Activated B cell treated with CpG ODN at 0.5 μM for 24 hours (primary cell): ENCODE measurements at regions of chr2 and their contacts with region 1.

Region 1: DNA sequence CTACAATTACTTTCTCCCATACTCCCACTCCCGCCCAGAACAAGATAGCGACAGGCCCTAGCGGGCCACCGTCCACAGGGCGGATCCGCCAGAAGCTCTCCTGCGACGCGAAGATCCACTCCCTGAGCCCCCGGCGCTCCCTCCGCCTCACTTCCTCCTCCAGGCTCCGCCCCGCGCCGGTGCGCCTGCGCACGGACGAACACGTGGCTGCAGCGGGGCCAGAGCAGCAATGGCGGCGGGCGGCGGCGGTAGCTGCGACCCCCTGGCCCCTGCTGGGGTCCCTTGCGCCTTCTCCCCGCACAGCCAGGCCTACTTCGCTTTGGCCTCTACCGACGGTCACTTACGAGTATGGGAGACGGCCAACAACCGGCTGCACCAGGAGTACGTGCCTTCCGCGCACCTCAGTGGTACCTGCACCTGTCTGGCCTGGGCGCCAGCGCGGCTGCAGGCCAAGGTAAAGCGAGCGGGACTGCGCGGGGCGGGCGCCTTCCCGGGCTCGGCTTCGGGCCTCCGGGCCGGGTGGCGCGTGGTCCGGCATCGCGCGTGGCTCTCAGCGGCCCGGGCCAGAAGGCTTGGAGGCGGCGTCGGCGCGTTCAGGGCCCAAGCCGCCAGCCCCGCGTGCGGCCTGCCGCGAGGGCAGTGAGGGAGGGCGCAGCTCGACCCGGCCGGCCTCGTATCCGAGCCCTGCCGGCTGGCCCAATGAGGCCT is at the start of gene WDR43:
- DNase-seq: peak; percentile 99
- ATAC-seq: peak; percentile 99
- H3K4me3 Mint-ChIP-seq: peak within 1 kb of the TSS; percentile 99
- H3K27ac Mint-ChIP-seq: peak within 1 kb of the TSS; percentile 87
- H3K4me1 Mint-ChIP-seq: peaks cover 44% of the 10 kb centered on the region
- H3K27me3 Mint-ChIP-seq: no peaks in the 10 kb centered on the region
- CTCF ChIP-seq: no peak
- total RNA-seq, gene WDR43: 86.6 and 98.8 TPM in 2 replicates

Region 2: DNA sequence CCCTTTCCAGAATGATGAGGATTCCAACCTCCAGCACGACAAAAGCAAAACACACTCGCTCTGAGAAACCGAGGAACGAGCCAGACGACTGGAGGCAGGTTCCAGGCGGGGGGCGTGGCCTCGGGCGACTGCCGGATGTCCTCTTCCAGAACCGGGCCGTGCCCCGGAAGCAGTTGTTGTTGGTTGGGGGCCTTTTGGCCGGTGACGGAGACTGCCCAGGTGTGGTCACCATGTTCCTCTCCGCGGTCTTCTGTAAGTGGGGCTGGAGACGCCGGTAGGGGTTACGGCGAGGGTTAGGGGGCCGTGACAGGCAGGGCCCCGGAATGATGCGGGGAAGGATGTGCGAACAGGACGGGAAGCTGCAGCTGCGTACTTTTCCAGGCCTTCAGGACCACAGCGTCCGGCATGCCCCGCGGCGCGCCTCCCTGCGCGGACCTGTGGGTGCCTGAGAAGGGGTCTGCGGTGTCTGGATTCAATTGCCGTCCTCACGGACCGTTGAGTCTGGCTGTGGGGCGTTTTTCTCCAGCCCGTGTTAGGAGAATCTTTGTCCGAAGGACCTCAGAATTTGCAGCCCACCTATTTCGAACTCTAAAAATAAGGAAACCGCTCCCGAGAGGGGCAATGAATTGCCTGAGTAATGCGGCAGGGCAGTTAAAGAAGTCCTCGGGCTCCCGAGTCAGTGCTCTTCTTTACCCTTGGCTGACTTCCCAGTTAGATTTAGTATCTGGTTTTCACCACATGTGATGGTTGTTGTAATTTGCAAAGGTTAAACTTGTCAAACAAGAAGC is 1122.9 kb before region 1 on chr2 and contains the start of gene MRPL33:
- CTCF ChIA-PET with region 1: no interaction called
- POLR2A ChIA-PET with region 1: no interaction called
- intact Hi-C with region 1: loop called (anchors 10 kb)
- DNase-seq: peak; percentile 85
- ATAC-seq: peak; percentile 92
- H3K4me3 Mint-ChIP-seq: peak within 1 kb of the TSS; percentile 100
- H3K27ac Mint-ChIP-seq: peak within 1 kb of the TSS; percentile 98
- H3K4me1 Mint-ChIP-seq: peaks cover 30% of the 10 kb centered on the region
- H3K27me3 Mint-ChIP-seq: peaks cover 13% of the 10 kb centered on the region
- CTCF ChIP-seq: no peak
- total RNA-seq, gene MRPL33: 24.6 and 27.4 TPM in 2 replicates

Region 3: DNA sequence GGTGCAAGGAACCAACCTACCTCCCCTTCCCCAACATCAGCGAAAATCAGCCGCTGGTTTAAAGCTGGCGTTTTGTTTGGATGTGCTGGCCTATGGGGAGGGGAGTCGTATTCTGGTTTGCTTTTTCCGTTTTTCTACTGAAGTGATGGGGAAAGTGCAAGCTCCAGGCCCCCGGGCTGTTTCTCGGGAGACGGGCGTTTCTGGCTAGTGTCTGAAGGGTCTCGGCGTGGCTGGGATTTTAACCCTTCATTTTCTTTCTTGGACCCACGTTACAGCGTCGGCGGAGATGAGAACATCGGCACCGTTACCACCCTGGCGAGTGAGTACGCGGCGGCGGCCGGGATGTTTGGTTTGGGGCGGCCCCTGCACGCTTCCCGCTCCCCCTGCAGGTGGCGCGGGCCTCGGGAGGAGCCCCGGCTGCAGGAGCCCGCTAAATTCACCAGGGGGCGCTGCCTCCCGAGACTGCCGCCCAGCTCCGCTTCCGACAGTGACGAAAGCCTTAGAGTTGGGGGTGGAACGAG is 328.0 kb before region 1 on chr2:
- CTCF ChIA-PET with region 1: no interaction called
- POLR2A ChIA-PET with region 1: interaction called, 5 read pairs
- intact Hi-C with region 1: loop called (anchors 1 kb)
- DNase-seq: peak; percentile 85
- ATAC-seq: peak; percentile 99
- H3K4me3 Mint-ChIP-seq: peak overlapping the region; percentile 93
- H3K27ac Mint-ChIP-seq: peak overlapping the region; percentile 76
- H3K4me1 Mint-ChIP-seq: peaks cover 12% of the 10 kb centered on the region
- H3K27me3 Mint-ChIP-seq: peaks cover 8% of the 10 kb centered on the region
- CTCF ChIP-seq: peak; percentile 23

Region 4: DNA sequence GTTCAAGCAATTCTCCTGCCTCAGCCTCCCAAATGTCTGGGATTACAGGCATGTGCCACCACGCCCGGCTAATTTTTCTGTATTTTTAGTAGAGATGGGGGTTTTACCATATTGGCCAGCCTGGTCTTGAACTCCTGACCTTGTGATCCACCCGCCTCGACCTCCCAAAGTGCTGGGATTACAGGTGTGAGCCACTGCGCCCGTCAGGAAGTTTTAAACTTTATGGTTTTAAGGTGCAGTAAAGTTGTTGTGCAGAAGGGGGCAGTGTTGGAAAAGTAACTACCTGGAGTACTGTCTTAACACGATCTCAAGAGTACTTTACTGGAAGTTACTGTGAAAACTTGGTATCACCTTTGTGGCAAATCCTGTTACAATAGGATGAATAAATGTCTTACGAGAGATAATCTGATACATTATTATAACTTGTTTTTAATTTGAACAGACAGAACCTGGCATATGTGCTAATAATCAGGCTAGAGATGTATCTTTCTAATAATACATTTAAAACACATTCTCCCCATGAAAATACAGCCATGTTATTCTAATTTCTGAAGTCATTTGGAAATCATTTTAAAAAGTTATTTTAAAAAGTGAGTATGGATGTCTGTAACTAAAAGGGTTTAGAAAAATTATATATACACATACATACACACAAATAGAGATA is 73.2 kb before region 1 on chr2:
- CTCF ChIA-PET with region 1: interaction called, 3 read pairs
- POLR2A ChIA-PET with region 1: interaction called, 4 read pairs
- intact Hi-C with region 1: loop called (anchors 5 kb)
- DNase-seq: peak; percentile 17
- ATAC-seq: peak; percentile 72
- H3K4me3 Mint-ChIP-seq: no peak overlapping the region
- H3K27ac Mint-ChIP-seq: no peak overlapping the region
- H3K4me1 Mint-ChIP-seq: peaks cover 4% of the 10 kb centered on the region
- H3K27me3 Mint-ChIP-seq: no peaks in the 10 kb centered on the region
- CTCF ChIP-seq: no peak

Region 5: DNA sequence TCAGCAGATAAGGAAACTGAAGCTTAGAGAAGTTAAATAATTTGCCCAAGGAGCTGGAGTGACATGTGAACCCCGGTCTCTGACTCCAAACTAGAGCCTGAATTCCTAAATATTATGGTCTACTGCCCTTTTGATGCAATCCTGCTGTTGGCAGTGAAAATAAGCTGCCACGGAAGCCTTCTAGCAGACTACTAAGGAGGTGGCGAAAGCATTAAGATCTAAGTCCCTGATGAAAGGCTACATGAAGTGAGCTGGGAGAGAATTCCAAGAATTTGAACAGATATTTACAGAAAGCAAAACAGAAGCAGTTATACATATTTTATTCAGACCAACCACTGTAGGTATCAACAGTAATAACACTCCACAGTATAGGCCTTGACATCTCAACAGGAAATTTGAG is 52.6 kb before region 1 on chr2:
- CTCF ChIA-PET with region 1: no interaction called
- POLR2A ChIA-PET with region 1: no interaction called
- intact Hi-C with region 1: no loop called
- DNase-seq: no peak
- ATAC-seq: no peak
- H3K4me3 Mint-ChIP-seq: no peak overlapping the region
- H3K27ac Mint-ChIP-seq: no peak overlapping the region
- H3K4me1 Mint-ChIP-seq: no peaks in the 10 kb centered on the region
- H3K27me3 Mint-ChIP-seq: no peaks in the 10 kb centered on the region
- CTCF ChIP-seq: no peak

Region 6: GRCh38 chr2:28855193-28855592 is 39.4 kb before region 1 on chr2:
- CTCF ChIA-PET with region 1: no interaction called
- POLR2A ChIA-PET with region 1: interaction called, 11 read pairs
- intact Hi-C with region 1: no loop called
- DNase-seq: no peak
- ATAC-seq: no peak
- H3K4me3 Mint-ChIP-seq: no peak overlapping the region
- H3K27ac Mint-ChIP-seq: no peak overlapping the region
- H3K4me1 Mint-ChIP-seq: no peaks in the 10 kb centered on the region
- H3K27me3 Mint-ChIP-seq: no peaks in the 10 kb centered on the region
- CTCF ChIP-seq: no peak

Region 7: DNA sequence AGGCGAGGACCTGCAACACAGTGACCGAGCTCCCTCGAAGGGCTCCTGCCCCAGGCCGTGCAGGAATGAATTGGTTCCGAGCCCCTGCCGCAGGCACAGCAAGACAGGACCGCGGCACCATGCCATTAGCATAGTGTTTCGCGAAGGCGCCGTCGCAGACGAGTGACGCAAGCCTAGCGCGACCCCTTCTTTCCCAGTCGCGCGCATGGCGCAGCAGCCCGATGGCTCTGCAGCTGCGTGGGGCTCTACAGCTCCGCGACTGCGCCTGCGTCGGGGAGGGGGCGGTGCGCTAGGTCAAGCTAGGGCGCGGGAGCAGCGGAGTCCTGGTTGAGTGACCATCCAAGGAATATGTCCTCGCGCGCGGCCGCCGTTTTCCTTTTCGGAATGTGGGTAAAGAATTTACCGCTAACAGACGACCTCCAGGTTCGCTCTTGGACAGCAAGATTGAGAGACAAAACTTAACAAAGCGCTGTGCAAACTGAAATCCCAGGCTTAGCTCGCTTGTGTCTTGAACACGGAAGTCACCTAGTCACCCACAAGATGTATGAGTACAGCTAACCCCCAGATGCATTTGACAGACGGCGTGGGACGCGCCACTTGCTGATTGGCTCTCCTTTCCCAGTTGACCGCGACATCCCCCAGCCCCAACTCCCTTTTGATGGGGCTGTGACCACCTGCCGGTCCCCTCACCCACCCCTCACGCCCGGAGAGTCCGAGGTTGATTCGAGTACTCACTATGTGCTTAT is 24.3 kb before region 1 on chr2 and contains the start of gene TRMT61B:
- CTCF ChIA-PET with region 1: interaction called, 3 read pairs
- POLR2A ChIA-PET with region 1: interaction called, 118 read pairs
- intact Hi-C with region 1: loop called (anchors 1 kb)
- DNase-seq: peak; percentile 98
- ATAC-seq: peak; percentile 97
- H3K4me3 Mint-ChIP-seq: peak within 1 kb of the TSS; percentile 97
- H3K27ac Mint-ChIP-seq: peak within 1 kb of the TSS; percentile 99
- H3K4me1 Mint-ChIP-seq: peaks cover 38% of the 10 kb centered on the region
- H3K27me3 Mint-ChIP-seq: no peaks in the 10 kb centered on the region
- CTCF ChIP-seq: no peak
- total RNA-seq, gene TRMT61B: 16.8 and 18.0 TPM in 2 replicates

Region 8: GRCh38 chr2:29022681-29023080 is 128.1 kb after region 1 on chr2:
- CTCF ChIA-PET with region 1: no interaction called
- POLR2A ChIA-PET with region 1: no interaction called
- intact Hi-C with region 1: no loop called
- DNase-seq: no peak
- ATAC-seq: no peak
- H3K4me3 Mint-ChIP-seq: no peak overlapping the region
- H3K27ac Mint-ChIP-seq: no peak overlapping the region
- H3K4me1 Mint-ChIP-seq: no peaks in the 10 kb centered on the region
- H3K27me3 Mint-ChIP-seq: no peaks in the 10 kb centered on the region
- CTCF ChIP-seq: no peak

Region 9: GRCh38 chr2:29950481-29950880 is 1055.9 kb after region 1 on chr2:
- CTCF ChIA-PET with region 1: no interaction called
- POLR2A ChIA-PET with region 1: no interaction called
- intact Hi-C with region 1: no loop called
- DNase-seq: no peak
- ATAC-seq: no peak
- H3K4me3 Mint-ChIP-seq: no peak overlapping the region
- H3K27ac Mint-ChIP-seq: no peak overlapping the region
- H3K4me1 Mint-ChIP-seq: no peaks in the 10 kb centered on the region
- H3K27me3 Mint-ChIP-seq: peaks cover 8% of the 10 kb centered on the region
- CTCF ChIP-seq: no peak

Region 10: GRCh38 chr2:30346471-30347169 is 1452.0 kb after region 1 on chr2:
- CTCF ChIA-PET with region 1: no interaction called
- POLR2A ChIA-PET with region 1: no interaction called
- intact Hi-C with region 1: no loop called
- DNase-seq: no peak
- ATAC-seq: no peak
- H3K4me3 Mint-ChIP-seq: no peak overlapping the region
- H3K27ac Mint-ChIP-seq: no peak overlapping the region
- H3K4me1 Mint-ChIP-seq: peaks cover 10% of the 10 kb centered on the region
- H3K27me3 Mint-ChIP-seq: no peaks in the 10 kb centered on the region
- CTCF ChIP-seq: no peak